ENCODE measurements at regions of chr1 and their contacts with region 1.

Region 1: DNA sequence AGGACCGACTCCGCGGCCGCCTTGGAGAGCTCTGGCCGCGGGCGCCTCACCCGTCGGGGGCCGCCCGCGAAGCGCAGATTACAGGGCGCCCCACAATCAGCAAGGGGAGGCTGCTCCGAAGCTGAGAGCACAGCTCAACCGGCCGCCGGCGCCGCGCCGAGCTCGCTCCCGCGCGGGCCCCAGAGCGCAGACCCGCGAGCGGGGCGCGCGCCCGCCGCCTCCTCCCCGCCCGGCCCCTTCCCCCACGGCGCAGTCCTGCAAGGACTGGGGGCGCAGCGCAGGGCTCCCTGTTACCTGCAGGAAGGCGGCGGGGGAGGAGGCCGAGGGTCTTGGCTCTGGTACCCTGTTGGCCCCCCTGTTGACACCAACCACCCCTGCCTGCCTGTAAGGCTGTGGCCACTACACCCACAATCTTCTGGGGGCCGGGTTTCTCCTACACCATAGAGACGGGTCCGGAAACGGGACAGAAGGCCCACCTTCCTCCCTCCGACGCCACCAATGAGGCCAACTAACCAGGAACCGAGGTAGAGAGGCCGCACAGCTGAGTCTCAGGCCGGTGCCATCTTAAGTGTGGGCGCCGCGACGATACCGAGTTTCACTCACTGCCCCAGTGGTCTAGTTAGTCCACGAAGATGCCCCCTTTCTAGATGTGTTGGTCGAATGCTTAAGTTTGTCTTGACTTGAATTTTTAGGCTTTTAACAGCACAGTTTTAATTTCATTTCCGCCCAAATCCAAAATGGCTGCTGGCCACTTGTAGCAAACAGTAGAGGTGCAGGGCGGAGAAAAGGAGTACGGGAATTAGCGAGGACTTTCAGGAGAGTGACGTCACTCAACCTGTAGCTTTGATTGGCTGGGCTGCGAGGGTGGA is at the start of gene SCYL3:
- DNase-seq: peak; percentile 92
- H3K4me3 Mint-ChIP-seq: peak within 1 kb of the TSS; percentile 82
- H3K27ac Mint-ChIP-seq: peak within 1 kb of the TSS; percentile 98
- H3K4me1 Mint-ChIP-seq: peaks cover 38% of the 10 kb centered on the region
- H3K27me3 Mint-ChIP-seq: no peaks in the 10 kb centered on the region
- total RNA-seq, gene SCYL3: 11.1 to 12.4 TPM

Region 2: DNA sequence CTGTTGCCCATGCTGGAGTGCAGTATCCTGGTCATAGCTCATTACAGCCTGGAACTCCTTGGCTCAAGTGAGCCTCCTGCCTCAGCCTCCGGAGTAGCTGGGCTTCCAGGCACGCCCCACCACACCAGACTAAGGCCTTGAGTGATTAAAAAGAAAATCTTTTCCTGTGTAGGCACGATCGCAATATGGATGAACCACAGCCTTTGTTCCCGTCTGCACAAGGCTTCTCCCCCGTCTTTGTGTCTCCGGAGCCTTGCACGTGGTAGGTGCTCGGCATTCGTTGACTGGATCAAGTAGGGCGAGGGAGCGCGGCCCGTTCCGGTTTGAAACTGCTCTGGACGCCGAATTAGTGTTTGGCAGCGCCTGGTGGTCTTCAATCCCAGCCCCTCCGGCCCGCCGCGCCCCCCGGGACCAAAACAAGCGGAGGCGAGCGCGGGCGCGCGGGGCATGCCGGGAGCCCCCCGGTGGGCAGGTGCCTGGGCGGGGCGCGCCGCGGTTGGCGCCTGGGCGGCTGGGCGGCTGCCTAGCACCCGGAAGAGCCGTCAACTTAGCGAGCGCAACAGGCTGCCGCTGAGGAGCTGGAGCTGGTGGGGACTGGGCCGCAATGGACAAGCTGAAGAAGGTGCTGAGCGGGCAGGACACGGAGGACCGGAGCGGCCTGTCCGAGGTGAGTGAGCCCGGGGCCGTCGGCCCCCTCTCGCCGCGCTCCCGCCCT is 1668.1 kb before region 1 on chr1 and contains the start of gene SFT2D2:
- CTCF ChIA-PET with region 1: no interaction called
- POLR2A ChIA-PET with region 1: no interaction called
- intact Hi-C with region 1: loop called (anchors 5 kb)
- DNase-seq: peak; percentile 83
- H3K4me3 Mint-ChIP-seq: peak within 1 kb of the TSS; percentile 91
- H3K27ac Mint-ChIP-seq: peak within 1 kb of the TSS; percentile 84
- H3K4me1 Mint-ChIP-seq: peaks cover 43% of the 10 kb centered on the region
- H3K27me3 Mint-ChIP-seq: peaks cover 7% of the 10 kb centered on the region
- total RNA-seq, gene SFT2D2: 52.3 to 52.9 TPM

Region 3: GRCh38 chr1:169794530-169795416 is 99.0 kb before region 1 on chr1 and contains the start of gene METTL18:
- CTCF ChIA-PET with region 1: interaction called, 3 read pairs
- POLR2A ChIA-PET with region 1: interaction called, 4 read pairs
- intact Hi-C with region 1: loop called (anchors 1 kb)
- DNase-seq: peak; percentile 96
- H3K4me3 Mint-ChIP-seq: peak within 1 kb of the TSS; percentile 100
- H3K27ac Mint-ChIP-seq: peak within 1 kb of the TSS; percentile 99
- H3K4me1 Mint-ChIP-seq: peaks cover 44% of the 10 kb centered on the region
- H3K27me3 Mint-ChIP-seq: no peaks in the 10 kb centered on the region
- total RNA-seq, gene METTL18: 10.8 to 10.9 TPM

Region 4: DNA sequence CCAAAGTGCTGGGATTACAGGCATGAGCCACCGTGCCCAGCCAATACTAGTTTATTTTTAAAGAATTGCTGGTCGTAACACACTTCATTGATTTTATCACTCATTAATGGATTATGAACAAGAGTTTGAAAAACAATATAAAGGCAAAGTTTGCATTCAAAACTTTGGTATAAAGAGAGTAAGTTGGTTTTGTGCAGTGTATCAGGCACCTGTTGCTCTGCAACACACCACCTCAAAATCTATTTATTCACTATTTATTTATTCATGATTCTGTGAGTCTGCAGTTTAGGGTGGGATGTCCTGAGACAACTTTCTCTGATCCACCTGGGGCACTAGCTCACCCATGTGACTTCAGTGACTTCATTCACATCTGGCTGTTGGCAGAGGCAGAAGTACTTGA is 88.8 kb before region 1 on chr1:
- CTCF ChIA-PET with region 1: no interaction called
- POLR2A ChIA-PET with region 1: no interaction called
- intact Hi-C with region 1: no loop called
- DNase-seq: no peak
- H3K4me3 Mint-ChIP-seq: no peak overlapping the region
- H3K27ac Mint-ChIP-seq: no peak overlapping the region
- H3K4me1 Mint-ChIP-seq: no peaks in the 10 kb centered on the region
- H3K27me3 Mint-ChIP-seq: no peaks in the 10 kb centered on the region

Region 5: DNA sequence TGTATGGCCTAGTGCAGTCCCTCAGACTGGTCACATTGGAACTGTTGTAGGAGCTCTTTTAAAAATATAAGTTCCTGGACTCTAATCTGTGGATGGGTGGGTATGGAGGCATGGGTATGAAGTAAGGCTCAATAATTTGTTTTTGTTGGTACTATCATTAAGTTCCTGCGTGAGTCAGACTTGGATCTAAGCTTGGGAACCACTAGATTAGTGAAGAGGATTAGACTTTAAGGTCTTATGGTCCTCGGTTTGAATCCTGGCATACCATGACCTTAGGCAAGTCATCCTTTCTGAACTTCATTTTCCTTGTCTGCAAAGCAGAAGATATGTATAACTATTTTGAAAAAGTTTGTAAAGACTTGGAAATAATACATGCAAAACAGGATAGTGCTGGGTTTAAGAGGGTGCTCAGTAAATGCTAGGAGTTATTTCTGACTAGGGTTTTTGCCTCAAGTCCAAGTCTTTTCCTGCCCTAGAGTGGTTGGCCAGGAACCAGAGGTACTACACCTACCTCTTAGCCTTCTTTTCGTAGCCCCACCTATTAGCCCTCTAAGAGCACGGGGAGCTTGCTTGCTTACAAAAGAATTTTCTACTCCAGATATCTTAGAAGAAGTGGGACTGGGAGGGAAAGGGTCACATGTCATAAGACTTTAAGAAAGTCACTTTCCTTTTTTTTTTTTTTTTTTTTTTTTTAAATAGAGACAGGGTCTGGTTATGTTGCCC is 60.4 kb before region 1 on chr1:
- CTCF ChIA-PET with region 1: no interaction called
- POLR2A ChIA-PET with region 1: no interaction called
- intact Hi-C with region 1: no loop called
- DNase-seq: no peak
- H3K4me3 Mint-ChIP-seq: no peak overlapping the region
- H3K27ac Mint-ChIP-seq: no peak overlapping the region
- H3K4me1 Mint-ChIP-seq: no peaks in the 10 kb centered on the region
- H3K27me3 Mint-ChIP-seq: no peaks in the 10 kb centered on the region

Region 6: GRCh38 chr1:169949139-169949538 is 55.4 kb after region 1 on chr1:
- CTCF ChIA-PET with region 1: no interaction called
- POLR2A ChIA-PET with region 1: no interaction called
- intact Hi-C with region 1: no loop called
- DNase-seq: no peak
- H3K4me3 Mint-ChIP-seq: no peak overlapping the region
- H3K27ac Mint-ChIP-seq: no peak overlapping the region
- H3K4me1 Mint-ChIP-seq: no peaks in the 10 kb centered on the region
- H3K27me3 Mint-ChIP-seq: no peaks in the 10 kb centered on the region

Region 7: DNA sequence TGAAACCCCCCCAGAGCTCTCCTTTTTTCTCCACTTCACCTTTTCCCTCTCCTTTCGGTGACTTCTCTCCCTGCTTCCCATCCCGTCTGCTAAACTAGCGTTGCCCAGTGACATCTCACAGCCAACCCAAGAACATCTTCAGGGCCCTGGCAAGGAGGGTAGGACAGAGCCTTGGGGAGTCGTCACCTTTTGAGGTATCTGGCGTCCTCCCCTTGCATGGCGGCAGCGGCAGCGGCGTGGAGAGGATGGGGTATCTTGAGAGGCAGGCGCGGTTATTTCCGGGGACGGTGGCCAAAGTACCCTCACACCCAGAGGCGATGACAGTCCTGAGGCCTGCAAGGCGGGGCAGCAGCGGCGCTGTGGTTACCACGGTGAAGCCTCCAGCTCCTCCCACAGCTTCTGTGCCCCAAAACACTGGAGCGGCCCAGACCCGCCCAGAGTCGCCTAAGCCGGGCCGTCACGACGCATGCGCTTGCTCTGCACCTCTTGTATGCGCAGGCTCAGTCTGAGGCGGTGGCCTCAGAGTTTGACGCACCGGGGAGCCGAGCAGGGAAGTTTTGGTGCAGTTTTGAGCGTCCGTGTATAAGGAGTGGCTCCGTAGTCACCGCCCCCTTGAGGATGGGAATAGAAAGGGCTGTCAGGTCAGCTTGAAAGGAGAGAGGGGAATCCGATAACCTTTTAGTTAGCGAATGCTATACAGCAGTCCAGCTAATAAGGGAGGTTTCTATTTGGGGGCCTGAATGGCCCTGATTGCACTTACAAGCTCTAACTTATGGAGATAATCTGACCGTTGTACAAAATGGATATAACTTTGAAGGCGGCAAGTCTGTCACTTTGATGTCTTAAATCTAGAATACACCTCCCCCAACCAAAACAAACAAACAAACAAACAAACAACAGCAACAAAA is 180.8 kb after region 1 on chr1 and contains the start of gene KIFAP3:
- CTCF ChIA-PET with region 1: interaction called, 4 read pairs
- POLR2A ChIA-PET with region 1: interaction called, 7 read pairs
- intact Hi-C with region 1: loop called (anchors 1 kb)
- DNase-seq: peak; percentile 98
- H3K4me3 Mint-ChIP-seq: peak within 1 kb of the TSS; percentile 96
- H3K27ac Mint-ChIP-seq: peak within 1 kb of the TSS; percentile 85
- H3K4me1 Mint-ChIP-seq: peaks cover 46% of the 10 kb centered on the region
- H3K27me3 Mint-ChIP-seq: no peaks in the 10 kb centered on the region
- total RNA-seq, gene KIFAP3: 15.6 to 15.7 TPM

Region 8: GRCh38 chr1:170978371-170978910 is 1084.7 kb after region 1 on chr1:
- CTCF ChIA-PET with region 1: no interaction called
- POLR2A ChIA-PET with region 1: no interaction called
- intact Hi-C with region 1: no loop called
- DNase-seq: no peak
- H3K4me3 Mint-ChIP-seq: no peak overlapping the region
- H3K27ac Mint-ChIP-seq: no peak overlapping the region
- H3K4me1 Mint-ChIP-seq: no peaks in the 10 kb centered on the region
- H3K27me3 Mint-ChIP-seq: peaks cover 11% of the 10 kb centered on the region

Region 9: GRCh38 chr1:171741872-171742576 is 1848.3 kb after region 1 on chr1 and contains the start of gene VAMP4:
- CTCF ChIA-PET with region 1: no interaction called
- POLR2A ChIA-PET with region 1: no interaction called
- intact Hi-C with region 1: loop called (anchors 5 kb)
- DNase-seq: peak; percentile 92
- H3K4me3 Mint-ChIP-seq: peak within 1 kb of the TSS; percentile 99
- H3K27ac Mint-ChIP-seq: peak within 1 kb of the TSS; percentile 100
- H3K4me1 Mint-ChIP-seq: peaks cover 47% of the 10 kb centered on the region
- H3K27me3 Mint-ChIP-seq: no peaks in the 10 kb centered on the region
- total RNA-seq, gene VAMP4: 13.2 to 14.2 TPM

Measured in activated CD4-positive, alpha-beta memory T cell treated with anti-CD3 and anti-CD28 coated beads for 36 hours (primary cell).